Mammary epithelial cell (primary cell): ENCODE measurements at regions of chr2 and their contacts with region 1.

Region 1: GRCh38 chr2:161160226-161161069 is at the start of gene TANK:
- DNase-seq: peak; percentile 95
- H3K4me3 ChIP-seq: peak within 1 kb of the TSS; percentile 79 to 90 (median 85)
- H3K27ac ChIP-seq: peak within 1 kb of the TSS; percentile 98
- H3K4me1 ChIP-seq: peaks cover 11% of the 10 kb centered on the region
- H3K27me3 ChIP-seq: no peaks in the 10 kb centered on the region
- CTCF ChIP-seq: no peak
- total RNA-seq, gene TANK: 61.8 to 76.8 TPM

Region 2: GRCh38 chr2:161077367-161078210 is 82.9 kb before region 1 on chr2:
- CTCF ChIA-PET with region 1: no interaction called
- dilution Hi-C with region 1: no loop called
- in situ Hi-C with region 1: no loop called
- intact Hi-C with region 1: loop called (anchors 5 kb)
- DNase-seq: peak; percentile 39
- H3K4me3 ChIP-seq: no peak overlapping the region
- H3K27ac ChIP-seq: peak overlapping the region; percentile 31
- H3K4me1 ChIP-seq: peaks cover 15% of the 10 kb centered on the region
- H3K27me3 ChIP-seq: no peaks in the 10 kb centered on the region
- CTCF ChIP-seq: no peak

Region 3: DNA sequence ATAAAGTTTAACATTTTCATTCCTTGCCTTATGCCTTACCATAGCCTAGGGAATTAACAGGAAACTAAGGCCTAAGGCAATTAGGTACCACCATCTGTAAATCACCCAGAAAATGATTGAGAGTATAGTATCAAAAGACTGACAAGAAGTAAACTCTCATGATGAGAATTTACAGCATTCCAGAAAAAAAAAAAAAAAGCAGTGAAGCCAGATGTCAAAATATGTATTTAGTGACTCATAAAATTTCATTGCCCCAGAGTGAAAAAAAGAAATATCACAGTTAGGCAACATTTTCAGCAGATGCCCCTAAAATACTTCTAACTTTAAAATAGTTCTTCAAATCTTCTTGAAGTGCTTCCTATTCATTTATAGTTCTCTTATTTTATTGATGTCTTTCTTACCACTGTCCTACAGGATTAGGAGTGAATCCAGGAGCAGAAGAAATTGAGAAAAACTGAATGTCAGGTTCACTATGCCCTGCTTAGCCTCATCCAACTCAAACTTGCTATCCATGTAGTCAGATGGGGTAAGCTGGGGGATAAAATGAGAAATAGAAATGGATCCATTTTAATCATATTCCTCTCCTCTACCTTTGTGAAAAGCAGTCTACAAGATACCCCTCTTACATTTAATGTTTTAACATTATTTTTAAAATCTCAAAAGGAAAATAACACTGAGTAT is 57.5 kb before region 1 on chr2:
- CTCF ChIA-PET with region 1: no interaction called
- dilution Hi-C with region 1: no loop called
- in situ Hi-C with region 1: no loop called
- intact Hi-C with region 1: loop called (anchors 2 kb)
- DNase-seq: peak; percentile 36
- H3K4me3 ChIP-seq: no peak overlapping the region
- H3K27ac ChIP-seq: peak overlapping the region; percentile 7
- H3K4me1 ChIP-seq: peaks cover 24% of the 10 kb centered on the region
- H3K27me3 ChIP-seq: no peaks in the 10 kb centered on the region
- CTCF ChIP-seq: no peak

Region 4: GRCh38 chr2:161122772-161123530 is 37.5 kb before region 1 on chr2:
- CTCF ChIA-PET with region 1: no interaction called
- dilution Hi-C with region 1: no loop called
- in situ Hi-C with region 1: no loop called
- intact Hi-C with region 1: loop called (anchors 2 kb)
- DNase-seq: peak; percentile 81
- H3K4me3 ChIP-seq: peak overlapping the region in 1 of 3 experiments; percentile 11
- H3K27ac ChIP-seq: peak overlapping the region; percentile 86
- H3K4me1 ChIP-seq: peaks cover 20% of the 10 kb centered on the region
- H3K27me3 ChIP-seq: no peaks in the 10 kb centered on the region
- CTCF ChIP-seq: no peak

Region 5: GRCh38 chr2:161308178-161308955 is 147.9 kb after region 1 on chr2 and contains the start of gene PSMD14:
- CTCF ChIA-PET with region 1: no interaction called
- dilution Hi-C with region 1: no loop called
- in situ Hi-C with region 1: no loop called
- intact Hi-C with region 1: loop called (anchors 5 kb)
- DNase-seq: peak; percentile 97
- H3K4me3 ChIP-seq: peak within 1 kb of the TSS; percentile 58 to 91 (median 70)
- H3K27ac ChIP-seq: peak within 1 kb of the TSS; percentile 94
- H3K4me1 ChIP-seq: peaks cover 4% of the 10 kb centered on the region
- H3K27me3 ChIP-seq: no peaks in the 10 kb centered on the region
- CTCF ChIP-seq: no peak
- total RNA-seq, gene PSMD14: 85.0 to 101 TPM